CD8-positive, alpha-beta T cell (primary cell): ENCODE measurements at regions of chr12 and their contacts with region 1.

Region 1: DNA sequence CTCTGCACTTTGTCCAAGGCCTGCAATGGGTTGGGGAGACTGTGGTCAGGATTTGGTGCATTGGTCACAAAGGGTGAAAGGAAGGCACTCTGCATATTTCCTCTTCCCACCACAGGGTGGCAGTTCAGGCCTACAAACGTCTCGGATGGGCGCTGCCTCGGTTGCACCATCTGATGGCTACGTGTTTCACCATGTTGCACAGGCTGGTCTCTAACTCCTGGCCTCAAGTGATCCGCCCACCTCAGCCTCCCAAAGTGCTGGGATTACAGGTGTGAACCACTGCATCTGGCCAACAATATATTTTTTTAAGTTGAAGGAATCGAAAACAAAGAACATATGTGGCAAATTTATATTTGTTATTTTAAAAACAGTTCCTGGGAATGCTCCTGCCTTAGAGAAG is 35.1 kb downstream of the TMBIM6 start:
- DNase-seq: peak in 8 of 9 experiments; percentile 20 to 72 (median 48)
- ATAC-seq: peak; percentile 74
- H3K4me3 ChIP-seq: no peak overlapping the region
- H3K4me3 Mint-ChIP-seq: no peak overlapping the region
- H3K27ac ChIP-seq: no peak overlapping the region
- H3K27ac Mint-ChIP-seq: no peak overlapping the region
- H3K4me1 ChIP-seq: peaks cover 10% of the 10 kb centered on the region
- H3K4me1 Mint-ChIP-seq: peaks cover 16% of the 10 kb centered on the region
- H3K27me3 ChIP-seq: no peaks in the 10 kb centered on the region
- H3K27me3 Mint-ChIP-seq: peaks cover 24% of the 10 kb centered on the region
- CTCF ChIP-seq: peak; percentile 55

Region 2: DNA sequence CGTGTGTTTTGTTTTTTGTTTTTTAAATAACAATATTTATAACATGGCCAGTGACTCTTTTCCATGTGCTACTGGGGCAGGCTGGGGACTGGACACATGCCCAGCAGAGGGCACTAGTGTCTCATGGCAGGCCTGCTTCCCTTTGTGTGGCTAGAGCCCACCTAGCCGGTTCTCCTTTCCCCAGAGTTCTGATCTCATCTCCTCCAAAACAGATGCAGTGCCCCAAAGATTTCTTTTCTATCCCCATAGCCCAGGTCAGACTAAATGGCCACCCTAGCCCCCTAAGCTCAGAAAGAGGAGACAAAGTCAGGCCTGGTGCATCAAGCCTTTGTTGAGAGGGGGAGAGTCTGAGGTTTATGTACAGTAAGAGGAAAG is 131.8 kb before region 1 on chr12:
- CTCF ChIA-PET with region 1: interaction called, 9 read pairs
- POLR2A ChIA-PET with region 1: no interaction called
- intact Hi-C with region 1: loop called (anchors 2 kb)
- DNase-seq: peak; percentile 71 to 91 (median 87)
- ATAC-seq: peak; percentile 98
- H3K4me3 ChIP-seq: no peak overlapping the region
- H3K4me3 Mint-ChIP-seq: no peak overlapping the region
- H3K27ac ChIP-seq: peak overlapping the region in 1 of 2 experiments; percentile 57
- H3K27ac Mint-ChIP-seq: peak overlapping the region; percentile 92
- H3K4me1 ChIP-seq: peaks cover 12% of the 10 kb centered on the region
- H3K4me1 Mint-ChIP-seq: peaks cover 35% of the 10 kb centered on the region
- H3K27me3 ChIP-seq: no peaks in the 10 kb centered on the region
- H3K27me3 Mint-ChIP-seq: no peaks in the 10 kb centered on the region
- CTCF ChIP-seq: peak; percentile 93

Region 3: DNA sequence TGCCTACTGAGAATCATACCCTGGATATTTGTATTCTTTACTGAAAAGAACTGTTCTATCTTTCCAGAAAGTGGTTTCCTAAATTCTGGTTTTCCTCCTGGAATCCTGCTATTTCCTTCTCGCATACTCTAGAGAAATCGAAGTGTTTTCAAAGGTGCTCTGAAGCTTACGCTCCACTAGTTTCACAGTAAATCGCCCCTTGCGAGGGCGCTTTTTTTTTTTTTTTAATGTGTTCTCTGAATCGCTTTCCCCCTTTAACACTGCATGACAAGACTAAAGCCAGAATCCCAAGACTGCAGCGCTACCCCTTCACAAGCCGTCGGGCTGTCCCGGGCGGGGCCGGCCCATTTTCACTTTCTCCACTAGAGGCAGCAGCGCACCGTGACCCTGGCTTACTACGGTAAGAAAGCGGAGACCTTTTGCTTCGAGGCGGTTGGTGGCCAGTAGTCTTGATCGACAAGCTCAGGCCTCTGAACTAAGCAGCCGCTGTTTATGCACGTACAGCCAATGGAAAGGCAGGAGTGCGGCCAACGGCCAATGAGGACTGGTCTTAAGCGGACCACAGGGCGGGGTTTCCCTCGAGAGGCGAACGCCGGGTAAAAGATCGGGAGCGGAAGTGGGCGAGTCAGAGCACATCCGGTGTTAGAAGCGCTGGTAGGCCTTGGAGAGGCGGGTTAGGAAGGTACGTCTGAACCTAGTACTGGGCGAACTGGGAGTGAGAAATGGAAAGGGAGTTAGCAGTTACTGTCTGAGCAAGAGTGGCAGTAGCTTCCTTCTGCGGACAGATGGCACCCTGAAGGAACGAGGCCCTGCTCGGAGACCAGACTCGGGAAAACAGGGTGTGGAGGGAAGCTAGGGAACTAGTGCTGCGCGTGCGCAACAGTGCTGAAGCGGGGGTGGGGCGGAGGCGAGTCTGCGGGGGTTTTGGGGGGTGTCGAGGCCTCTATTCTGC is 35.2 kb before region 1 on chr12 and contains the start of gene TMBIM6:
- CTCF ChIA-PET with region 1: interaction called, 38 read pairs
- POLR2A ChIA-PET with region 1: interaction called, 13 read pairs
- intact Hi-C with region 1: loop called (anchors 1 kb)
- DNase-seq: peak; percentile 96 to 100 (median 98)
- ATAC-seq: peak; percentile 86
- H3K4me3 ChIP-seq: peak within 1 kb of the TSS; percentile 63 to 88
- H3K4me3 Mint-ChIP-seq: peak within 1 kb of the TSS; percentile 93
- H3K27ac ChIP-seq: peak within 1 kb of the TSS; percentile 96 to 99
- H3K27ac Mint-ChIP-seq: peak within 1 kb of the TSS; percentile 98
- H3K4me1 ChIP-seq: peaks cover 38% of the 10 kb centered on the region
- H3K4me1 Mint-ChIP-seq: peaks cover 41% of the 10 kb centered on the region
- H3K27me3 ChIP-seq: no peaks in the 10 kb centered on the region
- H3K27me3 Mint-ChIP-seq: no peaks in the 10 kb centered on the region
- CTCF ChIP-seq: peak; percentile 93
- total RNA-seq, gene TMBIM6: 289 to 309 TPM

Region 4: GRCh38 chr12:49763006-49763591 is 13.3 kb before region 1 on chr12:
- CTCF ChIA-PET with region 1: interaction called, 78 read pairs
- POLR2A ChIA-PET with region 1: interaction called, 5 read pairs
- intact Hi-C with region 1: loop called in 1 of 2 experiments (anchors 1 kb)
- DNase-seq: peak; percentile 58 to 87 (median 83)
- ATAC-seq: peak; percentile 82
- H3K4me3 ChIP-seq: no peak overlapping the region
- H3K4me3 Mint-ChIP-seq: peak overlapping the region; percentile 37
- H3K27ac ChIP-seq: peak overlapping the region in 1 of 2 experiments; percentile 69
- H3K27ac Mint-ChIP-seq: peak overlapping the region; percentile 83
- H3K4me1 ChIP-seq: peaks cover 51% of the 10 kb centered on the region
- H3K4me1 Mint-ChIP-seq: peaks cover 59% of the 10 kb centered on the region
- H3K27me3 ChIP-seq: no peaks in the 10 kb centered on the region
- H3K27me3 Mint-ChIP-seq: no peaks in the 10 kb centered on the region
- CTCF ChIP-seq: peak; percentile 85

Region 5: GRCh38 chr12:49800421-49801140 is 24.2 kb after region 1 on chr12:
- CTCF ChIA-PET with region 1: interaction called, 12 read pairs
- POLR2A ChIA-PET with region 1: no interaction called
- intact Hi-C with region 1: no loop called
- DNase-seq: no peak
- ATAC-seq: no peak
- H3K4me3 ChIP-seq: no peak overlapping the region
- H3K4me3 Mint-ChIP-seq: no peak overlapping the region
- H3K27ac ChIP-seq: no peak overlapping the region
- H3K27ac Mint-ChIP-seq: no peak overlapping the region
- H3K4me1 ChIP-seq: no peaks in the 10 kb centered on the region
- H3K4me1 Mint-ChIP-seq: no peaks in the 10 kb centered on the region
- H3K27me3 ChIP-seq: no peaks in the 10 kb centered on the region
- H3K27me3 Mint-ChIP-seq: no peaks in the 10 kb centered on the region
- CTCF ChIP-seq: no peak

Region 6: GRCh38 chr12:49866859-49867579 is 90.6 kb after region 1 on chr12:
- CTCF ChIA-PET with region 1: interaction called, 5 read pairs
- POLR2A ChIA-PET with region 1: no interaction called
- intact Hi-C with region 1: loop called (anchors 1 kb)
- DNase-seq: peak; percentile 54 to 83 (median 74)
- ATAC-seq: peak; percentile 89
- H3K4me3 ChIP-seq: no peak overlapping the region
- H3K4me3 Mint-ChIP-seq: no peak overlapping the region
- H3K27ac ChIP-seq: no peak overlapping the region
- H3K27ac Mint-ChIP-seq: no peak overlapping the region
- H3K4me1 ChIP-seq: no peaks in the 10 kb centered on the region
- H3K4me1 Mint-ChIP-seq: no peaks in the 10 kb centered on the region
- H3K27me3 ChIP-seq: no peaks in the 10 kb centered on the region
- H3K27me3 Mint-ChIP-seq: no peaks in the 10 kb centered on the region
- CTCF ChIP-seq: peak; percentile 89